Caco-2 (cell line): ENCODE measurements at regions of chr9 and their contacts with region 1.

Region 1: DNA sequence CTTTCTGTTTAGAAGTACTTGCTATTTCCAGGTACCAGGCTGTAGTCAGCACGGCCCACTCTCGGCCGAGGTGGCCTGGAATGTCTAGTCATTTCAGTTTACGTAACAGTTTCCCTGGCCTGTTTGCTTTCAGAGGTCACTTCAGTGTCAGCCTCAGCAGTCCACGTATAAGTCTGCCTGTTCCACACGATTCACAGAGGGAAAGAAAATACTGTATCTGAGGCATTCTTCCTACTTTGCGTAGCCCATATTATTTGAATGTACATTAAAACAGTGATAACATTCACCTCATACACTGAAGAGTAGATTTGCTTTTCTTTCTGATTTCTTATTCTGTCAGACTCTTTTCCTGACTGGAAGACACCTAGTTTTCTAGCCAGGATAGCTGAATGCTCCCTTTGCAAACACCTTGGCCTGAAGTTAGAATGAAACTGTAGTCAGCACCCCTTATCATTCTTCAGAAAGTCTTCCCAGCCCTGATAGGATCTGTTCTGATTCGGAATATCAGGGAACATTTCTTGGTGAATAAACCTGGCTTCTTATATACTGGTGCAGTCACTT is 140.9 kb downstream of the AOPEP start:
- DNase-seq: peak; percentile 83 to 89
- H3K4me3 ChIP-seq: no peak overlapping the region
- H3K4me3 Mint-ChIP-seq: peak overlapping the region; percentile 64
- H3K27ac Mint-ChIP-seq: peak overlapping the region; percentile 96
- H3K4me1 ChIP-seq: peaks cover 55% of the 10 kb centered on the region
- H3K4me1 Mint-ChIP-seq: peaks cover 52% of the 10 kb centered on the region
- H3K27me3 ChIP-seq: no peaks in the 10 kb centered on the region
- H3K27me3 Mint-ChIP-seq: no peaks in the 10 kb centered on the region
- CTCF ChIP-seq: no peak

Region 2: GRCh38 chr9:94796687-94797086 is 70.7 kb before region 1 on chr9:
- CTCF ChIA-PET with region 1: no interaction called
- POLR2A ChIA-PET with region 1: no interaction called
- intact Hi-C with region 1: no loop called
- DNase-seq: no peak
- H3K4me3 ChIP-seq: no peak overlapping the region
- H3K4me3 Mint-ChIP-seq: no peak overlapping the region
- H3K27ac Mint-ChIP-seq: no peak overlapping the region
- H3K4me1 ChIP-seq: peaks cover 15% of the 10 kb centered on the region; the same call in 1 of the 2 replicates
- H3K4me1 Mint-ChIP-seq: peaks cover 10% of the 10 kb centered on the region
- H3K27me3 ChIP-seq: no peaks in the 10 kb centered on the region
- H3K27me3 Mint-ChIP-seq: no peaks in the 10 kb centered on the region
- CTCF ChIP-seq: no peak

Region 3: DNA sequence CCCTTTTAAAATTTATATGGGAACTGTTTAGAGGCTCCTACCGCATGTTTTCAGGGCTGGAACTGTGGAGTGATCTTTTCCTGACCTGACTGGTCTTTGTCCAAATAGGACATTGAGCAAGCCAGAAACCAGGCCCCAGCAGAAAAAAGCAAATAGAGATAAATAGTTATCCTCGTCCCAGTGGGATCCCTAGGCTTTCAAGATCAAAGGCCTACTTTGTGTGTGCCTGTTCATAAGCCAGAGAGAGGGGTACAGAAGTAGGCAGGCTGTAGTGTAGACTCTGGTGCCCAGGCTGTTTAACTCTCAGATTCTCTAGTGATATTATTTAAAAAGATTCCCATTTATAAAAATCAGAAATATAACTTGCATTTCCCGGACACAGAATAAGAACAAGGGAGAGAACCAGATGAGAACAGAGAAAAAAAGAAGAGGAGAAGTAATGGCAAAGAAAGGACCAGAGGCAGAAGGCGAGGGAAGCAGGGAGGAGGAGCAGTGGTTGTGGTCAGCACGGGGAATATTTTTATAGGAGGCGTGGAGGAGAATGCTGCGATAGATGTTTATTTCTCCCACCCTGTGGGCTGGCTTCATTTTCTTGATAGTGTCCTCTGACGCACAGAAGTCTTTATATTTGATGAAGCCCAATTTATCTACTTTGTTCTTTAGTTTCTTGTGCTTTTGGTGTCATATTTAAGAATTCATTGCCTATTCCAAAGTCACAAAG is 39.6 kb before region 1 on chr9:
- CTCF ChIA-PET with region 1: no interaction called
- POLR2A ChIA-PET with region 1: no interaction called
- intact Hi-C with region 1: loop called (anchors 1 kb)
- DNase-seq: peak; percentile 82 to 84
- H3K4me3 ChIP-seq: no peak overlapping the region
- H3K4me3 Mint-ChIP-seq: peak overlapping the region; percentile 22
- H3K27ac Mint-ChIP-seq: peak overlapping the region; percentile 76
- H3K4me1 ChIP-seq: peaks cover 25% of the 10 kb centered on the region
- H3K4me1 Mint-ChIP-seq: peaks cover 47% of the 10 kb centered on the region
- H3K27me3 ChIP-seq: no peaks in the 10 kb centered on the region
- H3K27me3 Mint-ChIP-seq: no peaks in the 10 kb centered on the region
- CTCF ChIP-seq: no peak

Region 4: GRCh38 chr9:94885854-94886447 is 18.6 kb after region 1 on chr9:
- CTCF ChIA-PET with region 1: no interaction called
- POLR2A ChIA-PET with region 1: no interaction called
- intact Hi-C with region 1: loop called (anchors 2 kb)
- DNase-seq: no peak
- H3K4me3 ChIP-seq: no peak overlapping the region
- H3K4me3 Mint-ChIP-seq: no peak overlapping the region
- H3K27ac Mint-ChIP-seq: peak overlapping the region; percentile 76
- H3K4me1 ChIP-seq: peaks cover 11% of the 10 kb centered on the region
- H3K4me1 Mint-ChIP-seq: peaks cover 8% of the 10 kb centered on the region
- H3K27me3 ChIP-seq: no peaks in the 10 kb centered on the region
- H3K27me3 Mint-ChIP-seq: no peaks in the 10 kb centered on the region
- CTCF ChIP-seq: no peak

Region 5: DNA sequence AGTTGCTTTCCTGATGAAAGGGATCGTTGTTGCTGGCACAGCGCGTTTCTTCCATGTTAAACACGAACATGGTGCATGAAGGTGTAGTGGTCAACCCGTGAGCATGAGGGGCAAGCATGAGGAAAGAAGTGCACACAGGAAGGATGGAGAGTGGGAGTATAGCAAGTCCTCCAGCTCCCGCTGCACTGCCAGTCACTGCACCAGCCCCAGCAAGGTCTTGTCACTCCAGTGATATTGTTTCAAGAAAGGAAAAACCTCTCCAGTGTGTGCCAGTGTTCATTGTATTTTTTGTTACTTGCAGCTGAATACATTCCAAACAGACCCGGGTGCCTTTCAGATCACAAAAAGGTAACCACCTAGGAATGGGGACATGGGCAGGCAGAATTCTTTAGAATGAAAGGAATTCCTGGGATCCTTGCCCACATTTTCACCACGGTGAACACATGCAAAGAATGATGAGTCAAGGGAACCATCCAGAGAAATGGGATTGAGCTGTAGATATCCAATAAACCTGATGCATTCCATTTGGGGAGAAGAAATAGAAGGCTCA is 45.4 kb after region 1 on chr9:
- CTCF ChIA-PET with region 1: no interaction called
- POLR2A ChIA-PET with region 1: no interaction called
- intact Hi-C with region 1: loop called (anchors 5 kb)
- DNase-seq: no peak
- H3K4me3 ChIP-seq: no peak overlapping the region
- H3K4me3 Mint-ChIP-seq: no peak overlapping the region
- H3K27ac Mint-ChIP-seq: peak overlapping the region; percentile 82
- H3K4me1 ChIP-seq: peaks cover 76% of the 10 kb centered on the region
- H3K4me1 Mint-ChIP-seq: peaks cover 47% of the 10 kb centered on the region
- H3K27me3 ChIP-seq: no peaks in the 10 kb centered on the region
- H3K27me3 Mint-ChIP-seq: no peaks in the 10 kb centered on the region
- CTCF ChIP-seq: no peak

Region 6: DNA sequence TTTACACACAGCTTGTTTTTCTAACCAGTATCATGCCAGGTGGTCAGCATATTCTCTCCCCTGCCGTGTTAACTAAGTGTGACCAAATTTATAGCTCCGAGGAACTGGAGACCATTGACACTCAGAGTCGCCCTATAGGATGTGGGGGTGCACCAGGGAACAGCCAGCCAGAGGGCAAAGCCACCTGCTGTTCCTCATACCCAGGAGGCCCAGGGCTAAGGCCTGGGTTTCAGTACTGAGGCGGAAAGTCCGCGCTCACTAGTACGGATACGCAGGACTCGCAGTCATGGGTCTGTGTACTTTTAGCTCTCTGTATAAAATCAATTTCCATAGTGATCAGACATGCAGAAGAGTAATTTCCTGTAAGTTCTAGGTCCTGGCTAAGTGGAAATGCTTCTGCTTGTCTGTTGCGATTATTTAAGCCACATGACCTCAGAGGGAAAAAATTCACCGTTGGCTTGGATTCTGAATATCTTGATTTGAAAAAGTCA is 106.1 kb after region 1 on chr9:
- CTCF ChIA-PET with region 1: no interaction called
- POLR2A ChIA-PET with region 1: no interaction called
- intact Hi-C with region 1: no loop called
- DNase-seq: no peak
- H3K4me3 ChIP-seq: no peak overlapping the region
- H3K4me3 Mint-ChIP-seq: no peak overlapping the region
- H3K27ac Mint-ChIP-seq: no peak overlapping the region
- H3K4me1 ChIP-seq: peaks cover 10% of the 10 kb centered on the region
- H3K4me1 Mint-ChIP-seq: peaks cover 14% of the 10 kb centered on the region
- H3K27me3 ChIP-seq: no peaks in the 10 kb centered on the region
- H3K27me3 Mint-ChIP-seq: no peaks in the 10 kb centered on the region
- CTCF ChIP-seq: no peak

Region 7: GRCh38 chr9:94993064-94993833 is 125.9 kb after region 1 on chr9:
- CTCF ChIA-PET with region 1: no interaction called
- POLR2A ChIA-PET with region 1: no interaction called
- intact Hi-C with region 1: loop called (anchors 5 kb)
- DNase-seq: no peak
- H3K4me3 ChIP-seq: no peak overlapping the region
- H3K4me3 Mint-ChIP-seq: peak overlapping the region; percentile 8
- H3K27ac Mint-ChIP-seq: peak overlapping the region; percentile 17
- H3K4me1 ChIP-seq: peaks cover 45% of the 10 kb centered on the region
- H3K4me1 Mint-ChIP-seq: peaks cover 25% of the 10 kb centered on the region
- H3K27me3 ChIP-seq: no peaks in the 10 kb centered on the region
- H3K27me3 Mint-ChIP-seq: no peaks in the 10 kb centered on the region
- CTCF ChIP-seq: no peak